ENCODE measurements at regions of chr7 and their contacts with region 1.

Region 1: DNA sequence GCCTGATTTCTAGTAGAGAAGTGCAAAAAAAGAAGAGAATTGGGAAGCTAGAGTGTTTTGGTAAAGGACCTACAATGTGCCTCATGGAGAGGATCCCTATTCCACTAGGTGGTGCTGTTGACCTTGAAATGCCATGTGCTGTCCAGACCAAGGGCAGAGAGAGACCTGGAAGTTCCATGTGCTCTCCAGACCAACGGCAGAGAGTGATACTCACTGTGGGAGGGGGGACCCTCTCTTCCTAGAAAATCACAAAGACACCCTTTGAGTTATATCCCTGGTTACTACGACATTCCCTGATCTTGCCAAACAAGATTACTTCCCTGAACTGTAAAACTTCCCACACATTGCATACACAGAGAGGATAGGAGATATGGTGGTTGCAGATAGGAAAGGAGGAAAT is 212.7 kb upstream of the ZNF804B start:
- DNase-seq: peak; percentile 19
- CTCF ChIP-seq: peak; percentile 72

Region 2: GRCh38 chr7:88835147-88835728 is 288.4 kb after region 1 on chr7:
- CTCF ChIA-PET with region 1: interaction called, 28 read pairs
- POLR2A ChIA-PET with region 1: no interaction called
- DNase-seq: peak; percentile 12
- CTCF ChIP-seq: peak; percentile 53

Region 3: DNA sequence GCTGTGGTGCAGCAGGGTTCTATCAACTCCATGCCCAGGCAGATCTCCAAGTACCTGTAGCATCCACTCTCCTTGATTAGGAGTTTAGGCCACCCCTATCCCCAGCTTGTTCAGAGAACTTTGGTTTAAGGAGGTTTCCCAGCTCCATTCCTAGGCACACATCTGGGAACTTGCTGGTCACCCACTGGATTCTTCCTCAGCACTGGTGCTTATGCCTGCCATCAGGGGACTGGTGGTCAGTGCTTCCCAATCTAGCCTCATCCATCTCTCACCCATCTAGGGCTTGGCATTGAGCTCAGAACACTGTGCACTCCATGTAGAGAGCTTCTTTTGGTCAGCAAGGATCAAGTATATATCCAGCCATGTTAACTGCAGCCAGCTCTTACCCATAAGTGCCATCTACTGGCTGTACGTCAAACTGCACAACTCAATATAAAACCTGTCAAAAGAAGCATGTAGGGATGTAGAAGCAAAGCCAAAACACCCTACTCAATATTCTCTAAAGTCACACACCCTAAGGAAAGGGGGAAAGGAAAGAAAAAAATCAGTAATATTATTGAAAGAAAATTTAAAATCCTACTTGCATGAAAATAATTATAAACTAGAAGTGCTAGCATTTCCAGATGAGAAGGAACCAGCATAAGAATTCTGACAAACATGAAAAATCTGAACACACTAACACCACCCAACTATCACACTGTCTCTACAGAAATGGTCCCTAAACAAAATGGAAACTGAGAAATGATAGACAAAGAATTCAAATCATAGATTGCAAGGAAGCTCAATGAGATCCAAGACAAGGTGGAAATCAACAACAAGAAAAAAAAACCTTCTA is 1076.2 kb after region 1 on chr7:
- CTCF ChIA-PET with region 1: interaction called, 25 read pairs
- POLR2A ChIA-PET with region 1: no interaction called
- DNase-seq: peak; percentile 18
- CTCF ChIP-seq: peak; percentile 76

Measured in GM10248 (cell line).